ENCODE measurements at regions of chr15 and their contacts with region 1.

Region 1: GRCh38 chr15:75367913-75368688 is at the start of gene MAN2C1:
- DNase-seq: peak; percentile 80 to 97 (median 88)
- ATAC-seq: peak; percentile 95
- H3K4me3 ChIP-seq: peak within 1 kb of the TSS; percentile 91
- H3K4me3 Mint-ChIP-seq: peak within 1 kb of the TSS; percentile 94
- H3K27ac ChIP-seq: peak within 1 kb of the TSS; percentile 93 to 96
- H3K27ac Mint-ChIP-seq: peak within 1 kb of the TSS; percentile 94
- H3K4me1 ChIP-seq: peaks cover 32% of the 10 kb centered on the region
- H3K4me1 Mint-ChIP-seq: peaks cover 30% of the 10 kb centered on the region
- H3K27me3 ChIP-seq: no peaks in the 10 kb centered on the region
- H3K27me3 Mint-ChIP-seq: no peaks in the 10 kb centered on the region
- CTCF ChIP-seq: peak; percentile 59
- total RNA-seq, gene MAN2C1: 519 to 546 TPM

Region 2: DNA sequence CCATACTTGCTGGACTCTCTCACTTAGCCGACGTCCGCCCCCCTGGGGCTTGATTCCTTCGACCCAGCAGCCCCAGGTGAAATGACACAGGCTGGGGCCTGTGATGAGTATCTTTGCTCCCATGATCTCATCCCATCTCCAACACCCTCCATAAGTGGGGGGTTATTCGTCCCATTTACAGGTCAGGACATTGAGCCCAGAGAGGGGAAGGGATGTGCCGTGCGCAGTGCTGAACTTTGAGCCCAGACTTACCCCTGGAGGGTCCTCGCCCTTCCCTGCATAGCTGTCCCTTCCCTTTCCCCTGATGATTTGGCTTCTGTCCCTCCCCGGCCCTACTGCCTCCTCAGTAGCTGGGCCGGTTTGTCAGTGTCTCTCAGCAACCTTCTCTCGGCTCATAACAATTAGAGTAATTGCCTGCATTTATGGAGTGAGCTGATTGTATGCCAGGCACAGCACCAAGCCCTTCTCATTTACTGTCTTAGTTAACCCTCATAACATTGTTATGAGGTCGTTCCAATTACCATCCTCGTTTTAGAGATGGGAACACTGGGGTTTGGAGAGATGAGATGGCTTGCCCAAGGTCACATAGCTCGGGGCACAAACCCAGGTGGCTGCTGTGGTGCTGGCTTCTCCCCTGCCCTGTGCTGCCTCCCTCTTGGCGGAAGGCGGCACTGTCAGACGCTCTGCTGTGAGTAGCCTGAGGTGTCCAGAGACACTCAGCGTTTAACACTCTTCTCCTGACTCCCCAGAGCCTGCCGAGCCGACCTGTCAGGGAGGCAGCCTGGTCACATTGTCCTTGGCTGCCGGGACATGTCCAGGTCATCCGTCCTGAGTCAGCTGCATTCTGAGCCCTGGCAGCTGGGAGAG is 551.1 kb before region 1 on chr15:
- CTCF ChIA-PET with region 1: no interaction called
- POLR2A ChIA-PET with region 1: no interaction called
- intact Hi-C with region 1: no loop called
- DNase-seq: no peak
- ATAC-seq: no peak
- H3K4me3 ChIP-seq: no peak overlapping the region
- H3K4me3 Mint-ChIP-seq: no peak overlapping the region
- H3K27ac ChIP-seq: no peak overlapping the region
- H3K27ac Mint-ChIP-seq: no peak overlapping the region
- H3K4me1 ChIP-seq: peaks cover 10% of the 10 kb centered on the region
- H3K4me1 Mint-ChIP-seq: no peaks in the 10 kb centered on the region
- H3K27me3 ChIP-seq: peaks cover 0 to 3% of the 10 kb centered on the region in 2 experiments
- H3K27me3 Mint-ChIP-seq: no peaks in the 10 kb centered on the region
- CTCF ChIP-seq: no peak

Region 3: DNA sequence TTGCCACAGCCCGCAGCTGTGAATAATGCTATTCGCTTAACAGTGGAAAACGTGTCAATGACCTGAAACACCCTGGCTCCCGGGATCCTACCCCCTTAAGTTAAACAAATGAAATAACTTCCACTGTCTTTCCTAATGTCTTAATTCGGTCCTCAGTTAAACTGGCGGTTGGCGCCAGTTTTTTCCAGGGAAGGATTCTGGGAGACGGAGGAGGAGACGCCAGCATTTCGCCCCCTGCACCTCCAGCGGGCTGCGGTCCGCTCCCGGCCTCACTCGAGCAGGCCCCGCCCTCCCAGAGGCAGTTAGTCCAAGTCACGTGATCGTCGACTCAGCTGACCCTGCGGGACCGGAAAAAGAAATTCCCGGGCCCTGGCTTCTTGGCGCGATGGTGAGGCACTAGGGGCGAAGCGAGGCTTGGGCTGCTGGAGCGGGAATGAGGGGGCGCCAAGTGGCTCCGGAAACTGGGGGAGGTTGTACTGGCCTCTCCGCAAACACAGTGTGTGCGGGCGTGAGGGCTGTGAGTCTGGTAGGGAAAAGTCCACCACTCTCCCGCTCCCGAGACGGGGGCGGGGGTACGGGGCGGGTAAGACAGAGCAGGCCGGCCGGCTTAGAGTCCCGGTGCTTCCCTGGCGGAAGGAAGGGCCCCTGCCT is 32.3 kb before region 1 on chr15 and contains the start of gene COMMD4:
- CTCF ChIA-PET with region 1: interaction called, 6 read pairs
- POLR2A ChIA-PET with region 1: interaction called, 16 read pairs
- intact Hi-C with region 1: no loop called
- DNase-seq: peak; percentile 34 to 83 (median 61)
- ATAC-seq: peak; percentile 64
- H3K4me3 ChIP-seq: peak within 1 kb of the TSS; percentile 89
- H3K4me3 Mint-ChIP-seq: peak within 1 kb of the TSS; percentile 88
- H3K27ac ChIP-seq: no peak within 1 kb of the TSS
- H3K27ac Mint-ChIP-seq: peak within 1 kb of the TSS; percentile 60
- H3K4me1 ChIP-seq: peaks cover 15% of the 10 kb centered on the region
- H3K4me1 Mint-ChIP-seq: peaks cover 21% of the 10 kb centered on the region
- H3K27me3 ChIP-seq: no peaks in the 10 kb centered on the region
- H3K27me3 Mint-ChIP-seq: no peaks in the 10 kb centered on the region
- CTCF ChIP-seq: no peak
- total RNA-seq, gene COMMD4: 10.8 to 12.1 TPM

Region 4: GRCh38 chr15:75380773-75381172 is 12.7 kb after region 1 on chr15:
- CTCF ChIA-PET with region 1: interaction called, 12 read pairs
- POLR2A ChIA-PET with region 1: interaction called, 18 read pairs
- intact Hi-C with region 1: no loop called
- DNase-seq: no peak
- ATAC-seq: no peak
- H3K4me3 ChIP-seq: no peak overlapping the region
- H3K4me3 Mint-ChIP-seq: no peak overlapping the region
- H3K27ac ChIP-seq: no peak overlapping the region
- H3K27ac Mint-ChIP-seq: no peak overlapping the region
- H3K4me1 ChIP-seq: no peaks in the 10 kb centered on the region
- H3K4me1 Mint-ChIP-seq: no peaks in the 10 kb centered on the region
- H3K27me3 ChIP-seq: no peaks in the 10 kb centered on the region
- H3K27me3 Mint-ChIP-seq: no peaks in the 10 kb centered on the region
- CTCF ChIP-seq: no peak

Region 5: DNA sequence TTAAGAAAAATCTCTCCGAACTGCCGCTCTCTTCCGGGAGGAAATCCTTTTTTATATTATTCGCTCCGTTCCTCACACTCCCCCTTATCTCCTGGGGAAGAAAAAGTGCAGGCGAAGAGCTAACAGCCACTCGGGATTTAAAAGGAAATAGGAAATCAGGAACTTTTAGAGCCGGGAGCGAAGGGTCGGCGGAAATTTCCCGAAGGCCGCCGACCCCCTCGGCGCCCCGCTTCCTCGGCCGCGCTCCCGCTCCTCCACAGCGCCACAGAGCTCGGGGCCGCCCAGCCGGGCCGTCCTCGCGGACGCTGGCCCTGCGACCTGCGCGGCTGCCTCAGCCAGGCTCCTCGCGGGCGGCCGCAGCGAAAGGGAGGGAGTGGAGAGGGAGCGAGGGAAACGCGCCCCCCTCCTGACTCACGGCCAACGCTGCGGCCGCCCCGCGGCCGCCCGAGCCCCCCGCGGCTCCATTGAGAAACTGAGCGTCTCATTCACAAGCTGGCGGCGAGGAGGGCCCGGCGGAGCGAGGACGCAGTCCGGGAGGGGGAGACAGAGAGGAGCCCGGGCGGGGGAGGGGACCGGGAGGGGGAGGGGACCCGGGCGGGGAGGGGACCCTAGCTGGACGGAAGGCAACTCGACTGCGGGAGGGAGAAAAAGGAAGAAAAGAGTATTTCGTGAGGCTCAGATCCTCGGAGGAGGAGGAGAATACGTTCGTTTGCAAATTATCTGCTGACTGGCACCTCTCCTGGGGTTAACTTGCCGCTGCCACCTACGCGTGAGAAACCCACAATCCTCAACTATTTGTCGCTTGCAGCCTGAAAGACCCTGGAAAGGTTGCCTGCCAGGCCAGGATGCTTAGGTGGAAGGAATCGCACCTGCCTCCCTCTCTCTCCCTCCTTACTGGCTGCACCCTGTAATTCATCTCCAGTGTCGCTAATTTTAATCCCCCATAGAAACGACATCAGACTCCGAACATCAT is 211.1 kb after region 1 on chr15 and contains the start of gene PTPN9:
- CTCF ChIA-PET with region 1: interaction called, 3 read pairs
- POLR2A ChIA-PET with region 1: interaction called, 18 read pairs
- intact Hi-C with region 1: no loop called
- DNase-seq: peak; percentile 46 to 82 (median 64)
- ATAC-seq: peak; percentile 82
- H3K4me3 ChIP-seq: peak within 1 kb of the TSS; percentile 79
- H3K4me3 Mint-ChIP-seq: peak within 1 kb of the TSS; percentile 97
- H3K27ac ChIP-seq: peak within 1 kb of the TSS; percentile 50 to 70
- H3K27ac Mint-ChIP-seq: peak within 1 kb of the TSS; percentile 82
- H3K4me1 ChIP-seq: peaks cover 22% of the 10 kb centered on the region
- H3K4me1 Mint-ChIP-seq: peaks cover 26% of the 10 kb centered on the region
- H3K27me3 ChIP-seq: no peaks in the 10 kb centered on the region
- H3K27me3 Mint-ChIP-seq: no peaks in the 10 kb centered on the region
- CTCF ChIP-seq: peak; percentile 66
- total RNA-seq, gene PTPN9: 8.1 to 8.2 TPM

Region 6: DNA sequence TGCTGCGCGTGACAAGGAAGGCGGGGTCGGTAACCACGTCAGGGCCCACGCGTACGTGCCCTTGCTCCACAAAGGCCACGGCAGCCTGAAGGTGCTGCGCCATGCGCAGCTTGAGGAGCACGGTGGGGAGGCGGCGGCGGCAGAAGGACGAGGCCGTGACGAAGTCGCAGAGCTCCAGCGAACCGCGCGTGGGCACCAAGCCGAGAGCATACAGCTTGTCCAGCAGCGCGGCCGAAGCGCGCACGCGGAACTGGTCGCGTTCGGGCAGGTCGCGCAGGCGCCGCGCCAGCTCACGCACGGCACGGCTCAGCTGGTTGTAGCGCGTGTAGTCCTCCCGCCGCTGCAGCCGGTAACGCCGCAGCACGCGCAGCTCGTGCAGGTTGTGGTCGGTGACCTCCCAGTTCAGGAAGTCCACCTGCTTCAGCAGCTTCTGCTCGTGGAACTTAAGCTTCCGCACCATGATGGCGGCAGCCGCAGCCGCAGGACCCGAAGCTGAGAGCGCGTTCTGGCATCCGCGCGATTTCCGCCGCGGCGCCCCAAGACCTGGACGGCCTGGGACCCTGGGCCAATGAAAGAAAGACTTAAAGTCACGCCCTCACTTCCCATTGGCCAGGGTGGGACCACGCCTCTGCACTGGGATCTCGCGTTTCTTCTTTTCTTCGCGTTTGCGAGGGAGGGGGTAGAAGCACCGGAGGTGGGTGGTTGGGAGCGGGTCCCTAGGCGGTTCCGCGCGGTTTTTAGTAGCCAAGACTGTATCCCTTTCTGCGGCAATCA is 271.8 kb after region 1 on chr15 and contains the start of gene IMP3:
- CTCF ChIA-PET with region 1: interaction called, 19 read pairs
- POLR2A ChIA-PET with region 1: interaction called, 124 read pairs
- intact Hi-C with region 1: loop called (anchors 1 kb)
- DNase-seq: peak; percentile 84 to 97 (median 90)
- ATAC-seq: peak; percentile 90
- H3K4me3 ChIP-seq: peak within 1 kb of the TSS; percentile 95
- H3K4me3 Mint-ChIP-seq: peak within 1 kb of the TSS; percentile 89
- H3K27ac ChIP-seq: peak within 1 kb of the TSS; percentile 92
- H3K27ac Mint-ChIP-seq: peak within 1 kb of the TSS; percentile 85
- H3K4me1 ChIP-seq: peaks cover 56% of the 10 kb centered on the region
- H3K4me1 Mint-ChIP-seq: peaks cover 35% of the 10 kb centered on the region
- H3K27me3 ChIP-seq: no peaks in the 10 kb centered on the region
- H3K27me3 Mint-ChIP-seq: no peaks in the 10 kb centered on the region
- CTCF ChIP-seq: no peak
- total RNA-seq, gene IMP3: 48.4 to 50.4 TPM

Region 7: GRCh38 chr15:75684642-75685041 is 316.5 kb after region 1 on chr15:
- CTCF ChIA-PET with region 1: interaction called, 6 read pairs
- POLR2A ChIA-PET with region 1: interaction called, 3 read pairs
- intact Hi-C with region 1: loop called (anchors 1 kb)
- DNase-seq: no peak
- ATAC-seq: no peak
- H3K4me3 ChIP-seq: no peak overlapping the region
- H3K4me3 Mint-ChIP-seq: no peak overlapping the region
- H3K27ac ChIP-seq: no peak overlapping the region
- H3K27ac Mint-ChIP-seq: no peak overlapping the region
- H3K4me1 ChIP-seq: peaks cover 5% of the 10 kb centered on the region
- H3K4me1 Mint-ChIP-seq: no peaks in the 10 kb centered on the region
- H3K27me3 ChIP-seq: no peaks in the 10 kb centered on the region
- H3K27me3 Mint-ChIP-seq: no peaks in the 10 kb centered on the region
- CTCF ChIP-seq: no peak

Region 8: GRCh38 chr15:76293361-76293760 is 925.3 kb after region 1 on chr15:
- CTCF ChIA-PET with region 1: no interaction called
- POLR2A ChIA-PET with region 1: no interaction called
- intact Hi-C with region 1: no loop called
- DNase-seq: no peak
- ATAC-seq: no peak
- H3K4me3 ChIP-seq: no peak overlapping the region
- H3K4me3 Mint-ChIP-seq: no peak overlapping the region
- H3K27ac ChIP-seq: no peak overlapping the region
- H3K27ac Mint-ChIP-seq: peak overlapping the region; percentile 25
- H3K4me1 ChIP-seq: no peaks in the 10 kb centered on the region
- H3K4me1 Mint-ChIP-seq: peaks cover 18% of the 10 kb centered on the region
- H3K27me3 ChIP-seq: no peaks in the 10 kb centered on the region
- H3K27me3 Mint-ChIP-seq: no peaks in the 10 kb centered on the region
- CTCF ChIP-seq: no peak

Measured in CD4-positive, alpha-beta T cell (primary cell).